GM12878 (cell line): ENCODE measurements at regions of chr14 and their contacts with region 1.

Region 1: DNA sequence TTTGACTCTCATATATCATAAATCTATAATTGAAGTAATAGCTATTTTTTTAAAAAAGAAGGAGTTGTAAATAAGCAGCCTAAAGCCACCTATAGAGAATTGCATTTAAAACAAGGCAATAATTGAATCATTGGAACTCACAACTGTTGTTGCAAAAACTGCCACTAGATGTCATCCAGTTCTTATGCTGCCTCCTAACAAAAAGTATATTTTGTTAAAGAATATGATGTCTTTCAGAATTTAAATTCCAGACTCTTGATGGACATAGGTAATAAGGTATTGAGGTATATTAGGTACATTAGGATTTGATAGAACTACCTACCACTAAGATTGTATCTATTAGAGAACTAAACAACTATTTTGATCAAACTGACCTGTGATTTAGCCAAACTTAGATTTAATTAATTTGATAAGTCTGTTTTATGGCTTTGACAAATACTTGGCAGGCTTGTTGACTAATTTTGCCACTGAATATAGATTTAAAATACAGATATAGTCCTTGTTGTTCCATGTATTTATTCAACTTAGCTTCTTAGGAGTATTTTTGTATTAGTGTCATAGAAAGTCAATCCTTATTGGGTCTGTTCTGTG is 401.4 kb downstream of the RPL10L start:
- DNase-seq: no peak
- ATAC-seq: peak; percentile 40; the same call in 1 of the 3 replicates
- H3K4me3 ChIP-seq: no peak overlapping the region
- H3K27ac ChIP-seq: no peak overlapping the region
- H3K4me1 ChIP-seq: no peaks in the 10 kb centered on the region
- H3K27me3 ChIP-seq: no peaks in the 10 kb centered on the region
- CTCF ChIP-seq: peak; percentile 52 to 60 (median 57); a peak in 5 of 6 replicates
- EP300 ChIP-seq: no peak
- POLR2A ChIP-seq: no peak
- RAD21 ChIP-seq: peak; percentile 60

Region 2: DNA sequence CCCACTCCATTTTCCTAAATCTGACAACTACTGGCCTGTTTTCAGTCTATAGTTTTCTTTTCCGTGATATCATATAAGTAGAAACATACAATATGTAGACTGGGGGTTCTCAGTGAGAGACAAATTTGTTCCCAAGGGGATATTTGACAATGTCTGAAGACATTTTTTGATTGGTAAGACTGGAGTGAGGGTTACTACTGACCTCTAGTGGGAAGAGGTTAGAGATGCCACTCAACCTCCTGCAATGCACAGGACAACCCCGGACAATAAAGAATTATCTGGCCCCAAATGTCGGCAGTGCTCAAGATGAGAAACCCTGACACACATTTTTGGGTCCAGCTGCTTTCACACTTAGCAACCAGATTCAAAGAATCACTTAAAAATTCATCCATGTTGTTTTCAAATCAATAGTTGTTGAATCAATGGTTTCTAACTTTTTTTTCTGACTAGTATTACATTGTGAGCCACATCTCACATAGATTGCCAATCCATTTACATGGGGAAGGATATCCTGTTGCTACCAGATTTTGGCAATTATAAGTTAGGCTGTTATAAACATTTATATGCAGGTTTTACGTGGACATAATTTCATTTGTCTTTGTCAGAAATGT is 94.2 kb after region 1 on chr14:
- CTCF ChIA-PET with region 1: interaction called, 16 read pairs
- POLR2A ChIA-PET with region 1: no interaction called
- RAD21 ChIA-PET with region 1: interaction called, 7 read pairs
- SMC1A ChIA-PET with region 1: interaction called, 10 read pairs
- in situ Hi-C with region 1: no loop called
- intact Hi-C with region 1: loop called (anchors 1 kb)
- DNase-seq: peak; percentile 2
- ATAC-seq: peak; percentile 95
- H3K4me3 ChIP-seq: no peak overlapping the region
- H3K27ac ChIP-seq: no peak overlapping the region
- H3K4me1 ChIP-seq: no peaks in the 10 kb centered on the region
- H3K27me3 ChIP-seq: no peaks in the 10 kb centered on the region
- CTCF ChIP-seq: peak; percentile 48 to 62 (median 61)
- EP300 ChIP-seq: no peak
- POLR2A ChIP-seq: no peak
- RAD21 ChIP-seq: peak; percentile 78

Region 3: GRCh38 chr14:47278234-47278842 is 1028.1 kb after region 1 on chr14:
- CTCF ChIA-PET with region 1: no interaction called
- POLR2A ChIA-PET with region 1: no interaction called
- RAD21 ChIA-PET with region 1: no interaction called
- SMC1A ChIA-PET with region 1: no interaction called
- in situ Hi-C with region 1: no loop called
- intact Hi-C with region 1: loop called (anchors 10 kb)
- DNase-seq: no peak
- ATAC-seq: peak; percentile 94
- H3K4me3 ChIP-seq: no peak overlapping the region
- H3K27ac ChIP-seq: no peak overlapping the region
- H3K4me1 ChIP-seq: no peaks in the 10 kb centered on the region
- H3K27me3 ChIP-seq: no peaks in the 10 kb centered on the region
- CTCF ChIP-seq: peak; percentile 55 to 72 (median 68)
- EP300 ChIP-seq: no peak
- POLR2A ChIP-seq: no peak
- RAD21 ChIP-seq: peak; percentile 59